GM10248 (cell line): ENCODE measurements at regions of chr7 and their contacts with region 1.

Region 1: GRCh38 chr7:105013221-105013815 is 687 bp upstream of the KMT2E start:
- DNase-seq: peak; percentile 85
- CTCF ChIP-seq: peak; percentile 25

Region 2: GRCh38 chr7:105003275-105003674 is 10.0 kb before region 1 on chr7:
- CTCF ChIA-PET with region 1: interaction called, 6 read pairs
- POLR2A ChIA-PET with region 1: interaction called, 10 read pairs
- DNase-seq: no peak
- CTCF ChIP-seq: no peak

Region 3: GRCh38 chr7:105024743-105025142 is 11.4 kb after region 1 on chr7:
- CTCF ChIA-PET with region 1: interaction called, 38 read pairs
- POLR2A ChIA-PET with region 1: interaction called, 16 read pairs
- DNase-seq: no peak
- CTCF ChIP-seq: no peak

Region 4: GRCh38 chr7:105224884-105225651 is 211.8 kb after region 1 on chr7:
- CTCF ChIA-PET with region 1: no interaction called
- POLR2A ChIA-PET with region 1: no interaction called
- DNase-seq: peak; percentile 45
- CTCF ChIP-seq: no peak